Gastrocnemius medialis (tissue), 4 donors: ENCODE measurements at regions of chr15 and their contacts with region 1.

Region 1: DNA sequence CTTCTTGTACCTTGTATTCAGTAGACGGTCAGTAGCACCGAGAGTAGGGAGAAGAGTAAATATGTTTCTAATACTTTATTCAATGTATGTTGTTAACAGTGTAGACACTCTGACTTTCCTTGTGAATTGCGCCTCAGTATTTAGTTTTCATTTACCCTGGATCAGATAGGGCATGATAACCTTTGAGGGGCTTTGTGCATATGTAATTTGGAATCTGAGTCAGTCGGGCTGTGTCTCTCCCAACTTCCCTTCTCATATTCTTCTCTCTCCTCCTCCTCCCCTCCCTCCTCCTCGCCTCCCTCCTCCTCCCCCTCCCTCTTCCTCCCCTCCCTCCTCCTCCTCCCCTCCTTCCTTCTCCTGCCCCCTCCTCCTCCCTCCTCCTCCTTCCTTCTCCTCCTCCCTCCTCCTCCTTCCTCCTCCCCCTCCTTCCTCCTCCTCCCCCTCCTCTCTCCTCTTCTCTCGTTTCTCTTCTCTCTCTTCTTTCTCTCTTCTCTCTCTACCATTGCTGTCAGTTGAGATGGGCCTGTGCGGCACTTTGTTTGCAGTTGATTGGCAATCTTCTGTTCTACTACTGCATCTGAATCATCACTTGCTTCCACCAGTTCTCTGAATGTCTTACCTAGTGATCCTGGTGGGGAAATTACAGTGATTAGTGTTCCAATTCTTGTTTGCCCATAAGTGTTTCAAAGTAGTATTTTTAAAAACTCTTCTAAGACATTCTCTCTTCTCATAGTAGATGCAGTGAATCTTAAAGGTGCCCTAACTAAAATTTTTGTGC is 162.3 kb downstream of the PGPEP1L start:
- DNase-seq: no peak
- ATAC-seq: no peak
- H3K4me3 ChIP-seq: no peak overlapping the region
- H3K27ac ChIP-seq: no peak overlapping the region
- H3K4me1 ChIP-seq: peaks cover 0 to 2% of the 10 kb centered on the region in 2 donors
- H3K27me3 ChIP-seq: no peaks in the 10 kb centered on the region
- CTCF ChIP-seq: no peak
- POLR2A ChIP-seq: no peak

Region 2: DNA sequence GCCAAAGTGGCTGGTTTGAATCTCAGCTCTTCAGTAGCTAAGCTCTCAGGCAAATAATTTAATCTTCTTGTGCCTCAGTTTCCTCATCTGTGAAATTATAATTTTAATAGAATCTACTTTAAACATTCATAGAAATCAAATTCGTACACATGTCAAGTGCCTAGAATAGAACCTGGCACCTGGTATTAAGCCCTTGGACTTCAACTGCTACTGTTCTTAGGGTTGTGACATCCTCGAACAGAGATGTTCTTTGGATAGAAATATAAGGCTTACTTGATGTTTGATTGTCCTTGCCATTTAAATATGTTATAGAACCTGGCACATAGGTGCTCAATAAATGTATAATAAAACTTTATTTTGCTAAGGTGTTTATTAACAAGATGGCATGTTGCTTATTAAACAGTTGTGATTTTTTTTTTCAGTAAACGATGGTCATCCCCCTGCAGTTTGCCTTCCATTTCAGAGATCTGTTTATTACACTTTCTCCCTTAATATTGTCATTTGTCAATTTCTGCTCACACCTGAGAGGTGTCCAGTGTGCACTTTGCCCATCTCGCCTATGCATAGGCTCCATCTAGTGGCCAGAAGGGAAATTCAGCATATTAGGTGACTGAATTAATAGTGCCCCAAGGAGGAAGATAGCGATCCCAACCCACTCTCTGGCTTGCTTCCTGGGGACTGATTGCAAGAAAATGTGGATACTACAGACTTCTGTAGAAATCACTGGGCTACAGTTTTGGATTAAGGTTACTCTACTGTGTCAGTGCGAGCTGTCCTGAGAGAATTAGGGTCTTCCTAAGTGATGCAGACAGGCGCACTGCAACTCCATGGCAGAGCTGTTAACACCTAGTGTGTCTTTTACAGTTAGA is 186.2 kb before region 1 on chr15:
- in situ Hi-C with region 1: loop called in 1 of 4 experiments (anchors 10 kb)
- intact Hi-C with region 1: no loop called
- DNase-seq: peak; percentile 20
- ATAC-seq: peak; percentile 89 to 92
- H3K4me3 ChIP-seq: peak overlapping the region in 1 of 4 donors; percentile 33
- H3K27ac ChIP-seq: peak overlapping the region in 1 of 4 donors; percentile 36
- H3K4me1 ChIP-seq: peaks cover 32 to 59% of the 10 kb centered on the region in 2 donors
- H3K27me3 ChIP-seq: no peaks in the 10 kb centered on the region
- CTCF ChIP-seq: peak; percentile 41 to 86 (median 69)
- POLR2A ChIP-seq: no peak

Region 3: GRCh38 chr15:98996169-98996568 is 150.9 kb after region 1 on chr15:
- in situ Hi-C with region 1: no loop called
- intact Hi-C with region 1: no loop called
- DNase-seq: no peak
- ATAC-seq: no peak
- H3K4me3 ChIP-seq: no peak overlapping the region
- H3K27ac ChIP-seq: no peak overlapping the region
- H3K4me1 ChIP-seq: peaks cover 14 to 22% of the 10 kb centered on the region in 2 donors
- H3K27me3 ChIP-seq: no peaks in the 10 kb centered on the region
- CTCF ChIP-seq: no peak
- POLR2A ChIP-seq: no peak